HCT116 (cell line): ENCODE measurements at regions of chr19 and their contacts with region 1.

Region 1: GRCh38 chr19:36132489-36132891 is 7.4 kb upstream of the CAPNS1 start:
- DNase-seq: peak; percentile 91
- ATAC-seq: peak; percentile 57
- H3K4me3 ChIP-seq: peak overlapping the region in 1 of 2 experiments; percentile 32; a peak in 2 of 4 replicates
- H3K27ac ChIP-seq: peak overlapping the region; percentile 60
- H3K4me1 ChIP-seq: peaks cover 71 to 96% of the 10 kb centered on the region in 2 experiments
- H3K27me3 ChIP-seq: no peaks in the 10 kb centered on the region
- CTCF ChIP-seq: no peak
- POLR2A ChIP-seq: no peak
- RAD21 ChIP-seq: no peak

Region 2: DNA sequence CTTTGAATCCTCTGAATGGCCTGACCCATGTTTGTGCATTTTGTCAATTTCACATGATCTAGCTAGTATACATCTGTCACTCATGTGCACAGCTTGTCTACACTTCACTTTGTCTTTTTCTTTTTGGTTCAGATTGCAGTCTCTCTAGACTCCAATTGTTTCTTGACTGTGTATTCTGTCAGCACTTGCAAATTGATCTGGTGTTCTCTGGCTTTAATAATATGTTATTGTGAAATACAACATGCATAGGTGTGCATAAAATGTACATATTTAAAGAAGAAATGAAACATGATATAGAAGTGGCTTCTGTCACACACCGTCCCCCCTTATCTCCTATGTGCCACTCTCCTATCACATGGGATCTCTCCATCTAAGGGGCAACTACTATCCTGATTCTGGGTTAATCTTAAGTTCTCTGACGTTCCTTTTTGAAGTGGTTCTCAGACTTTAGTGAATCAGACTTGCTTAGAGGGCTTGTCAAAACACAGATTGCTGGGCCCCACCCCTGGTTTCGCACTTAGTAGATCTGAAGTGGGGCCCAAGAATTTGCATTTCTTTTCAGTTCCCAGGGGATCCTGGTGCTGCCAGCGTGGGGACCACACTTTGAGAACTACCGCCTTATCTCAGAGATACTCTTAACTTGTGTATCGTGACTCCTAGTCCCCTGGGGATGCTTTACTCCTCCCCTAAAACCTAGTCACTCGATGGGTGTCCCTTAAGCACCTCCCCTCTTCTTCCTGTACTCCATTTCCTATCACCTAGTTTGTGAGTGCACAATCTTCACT is 648.0 kb before region 1 on chr19:
- CTCF ChIA-PET with region 1: no interaction called
- POLR2A ChIA-PET with region 1: no interaction called
- RAD21 ChIA-PET with region 1: no interaction called
- intact Hi-C with region 1: no loop called
- DNase-seq: no peak
- ATAC-seq: no peak
- H3K4me3 ChIP-seq: no peak overlapping the region
- H3K27ac ChIP-seq: no peak overlapping the region
- H3K4me1 ChIP-seq: peaks cover 0 to 1% of the 10 kb centered on the region in 2 experiments; a peak in 2 of 4 replicates
- H3K27me3 ChIP-seq: peaks cover 9% of the 10 kb centered on the region
- CTCF ChIP-seq: no peak
- POLR2A ChIP-seq: no peak
- RAD21 ChIP-seq: no peak

Region 3: DNA sequence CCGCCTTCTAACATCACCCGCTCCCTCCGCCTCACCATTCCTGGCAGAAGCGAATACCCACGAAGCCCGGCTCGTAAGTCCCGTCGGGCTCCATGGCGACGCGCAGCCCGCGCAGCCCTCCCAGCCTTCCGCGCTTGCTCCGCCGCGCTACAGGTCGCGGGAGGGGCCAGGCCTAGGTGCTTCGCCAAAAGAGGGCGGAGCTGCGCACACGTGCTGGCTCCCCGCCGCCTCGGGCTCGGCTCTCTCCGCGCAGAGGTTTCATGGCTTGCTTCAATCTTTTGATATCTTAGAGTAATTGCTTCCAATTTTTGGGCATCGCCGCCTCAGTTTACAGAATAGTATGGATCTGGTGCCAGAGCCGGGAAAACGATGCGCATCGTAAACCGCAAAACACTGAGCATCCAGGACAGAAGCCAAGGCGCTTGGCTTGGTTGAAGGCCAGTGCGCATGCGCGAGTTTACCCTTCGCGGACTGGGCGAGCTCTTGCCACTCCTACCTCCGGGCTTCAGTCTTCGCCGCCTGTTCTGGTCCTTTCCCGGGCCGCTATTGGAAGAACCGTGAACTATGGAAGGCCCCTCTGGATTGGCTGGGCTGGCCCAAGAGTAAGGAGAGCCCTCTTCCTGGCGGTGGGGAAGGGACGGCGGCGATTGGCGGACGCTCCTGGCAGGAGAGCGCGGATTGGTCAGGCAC is 17.6 kb before region 1 on chr19 and contains the start of gene POLR2I:
- CTCF ChIA-PET with region 1: interaction called, 16 read pairs
- POLR2A ChIA-PET with region 1: interaction called, 19 read pairs
- RAD21 ChIA-PET with region 1: no interaction called
- intact Hi-C with region 1: no loop called
- DNase-seq: peak; percentile 99
- ATAC-seq: peak; percentile 92
- H3K4me3 ChIP-seq: peak within 1 kb of the TSS; percentile 82 to 99
- H3K27ac ChIP-seq: peak within 1 kb of the TSS; percentile 92
- H3K4me1 ChIP-seq: peaks cover 7 to 27% of the 10 kb centered on the region in 2 experiments; a peak in 3 of 4 replicates
- H3K27me3 ChIP-seq: no peaks in the 10 kb centered on the region
- CTCF ChIP-seq: no peak
- POLR2A ChIP-seq: peak; percentile 90
- RAD21 ChIP-seq: no peak
- total RNA-seq, gene POLR2I: 108 TPM

Region 4: GRCh38 chr19:36169084-36169760 is 36.7 kb after region 1 on chr19:
- CTCF ChIA-PET with region 1: interaction called, 17 read pairs
- POLR2A ChIA-PET with region 1: interaction called, 12 read pairs
- RAD21 ChIA-PET with region 1: interaction called in 1 of 2 experiments, 3 read pairs
- intact Hi-C with region 1: loop called (anchors 1 kb)
- DNase-seq: no peak
- ATAC-seq: no peak
- H3K4me3 ChIP-seq: no peak overlapping the region
- H3K27ac ChIP-seq: peak overlapping the region; percentile 13; the same call in 1 of the 2 replicates
- H3K4me1 ChIP-seq: peaks cover 6 to 13% of the 10 kb centered on the region in 2 experiments; a peak in 3 of 4 replicates
- H3K27me3 ChIP-seq: no peaks in the 10 kb centered on the region
- CTCF ChIP-seq: no peak
- POLR2A ChIP-seq: no peak
- RAD21 ChIP-seq: no peak

Region 5: GRCh38 chr19:36489118-36489919 is 356.8 kb after region 1 on chr19 and contains the start of gene ZNF566:
- CTCF ChIA-PET with region 1: interaction called, 7 read pairs
- POLR2A ChIA-PET with region 1: no interaction called
- RAD21 ChIA-PET with region 1: no interaction called
- intact Hi-C with region 1: loop called (anchors 1 kb)
- DNase-seq: peak; percentile 93
- ATAC-seq: peak; percentile 96
- H3K4me3 ChIP-seq: peak within 1 kb of the TSS; percentile 68 to 91
- H3K27ac ChIP-seq: peak within 1 kb of the TSS; percentile 74
- H3K4me1 ChIP-seq: peaks cover 0 to 18% of the 10 kb centered on the region in 2 experiments; a peak in 2 of 4 replicates
- H3K27me3 ChIP-seq: no peaks in the 10 kb centered on the region
- CTCF ChIP-seq: no peak
- POLR2A ChIP-seq: peak; percentile 38
- RAD21 ChIP-seq: no peak
- total RNA-seq, gene ZNF566: 6.4 TPM